ENCODE measurements at regions of chr1 and their contacts with region 1.

Region 1: GRCh38 chr1:10143961-10144485 is 66.3 kb upstream of the KIF1B start:
- DNase-seq: no peak
- ATAC-seq: no peak
- H3K4me3 ChIP-seq: no peak overlapping the region
- H3K27ac ChIP-seq: no peak overlapping the region
- H3K4me1 ChIP-seq: no peaks in the 10 kb centered on the region
- H3K27me3 ChIP-seq: no peaks in the 10 kb centered on the region
- CTCF ChIP-seq: no peak

Region 2: DNA sequence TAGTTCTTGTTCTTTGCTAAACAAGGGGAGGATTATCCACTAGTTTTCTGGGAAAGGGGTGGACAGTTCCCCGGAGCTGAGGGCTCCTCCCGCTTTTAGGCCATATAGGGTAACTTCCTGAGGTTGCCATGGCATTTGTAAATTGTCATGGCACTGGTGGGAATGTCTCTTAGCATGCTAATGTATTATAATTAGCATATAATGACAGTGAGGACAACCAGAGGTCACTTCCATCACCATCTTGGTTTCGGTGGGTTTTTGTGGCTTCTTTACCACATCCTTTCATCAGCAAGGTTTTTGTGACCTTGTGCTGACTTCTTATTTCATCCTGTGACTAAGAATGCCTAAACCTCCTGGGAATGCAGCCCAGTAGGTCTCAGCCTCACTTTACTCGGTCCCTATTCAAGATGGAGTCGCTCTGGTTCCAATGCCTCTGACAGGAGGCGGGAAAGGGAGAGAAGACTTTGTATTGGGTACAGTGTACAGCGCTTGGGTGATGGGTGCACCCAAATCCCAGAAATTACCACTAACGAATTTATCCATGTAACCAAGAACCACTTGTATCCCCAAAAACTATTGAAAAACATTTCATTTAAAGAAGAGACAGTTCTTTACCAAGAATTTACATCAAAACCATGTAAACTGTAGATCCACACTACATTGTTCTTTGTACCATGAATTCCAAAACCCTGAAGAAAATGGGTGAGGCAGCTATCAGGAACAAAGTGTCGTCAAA is 1065.8 kb before region 1 on chr1:
- CTCF ChIA-PET with region 1: no interaction called
- POLR2A ChIA-PET with region 1: no interaction called
- in situ Hi-C with region 1: no loop called
- intact Hi-C with region 1: no loop called
- DNase-seq: no peak
- ATAC-seq: no peak
- H3K4me3 ChIP-seq: no peak overlapping the region
- H3K27ac ChIP-seq: no peak overlapping the region
- H3K4me1 ChIP-seq: no peaks in the 10 kb centered on the region; the same call in 1 of the 2 replicates
- H3K27me3 ChIP-seq: no peaks in the 10 kb centered on the region
- CTCF ChIP-seq: no peak

Region 3: GRCh38 chr1:10216090-10216749 is 72.2 kb after region 1 on chr1:
- CTCF ChIA-PET with region 1: interaction called, 20 read pairs
- POLR2A ChIA-PET with region 1: no interaction called
- in situ Hi-C with region 1: no loop called
- intact Hi-C with region 1: no loop called
- DNase-seq: no peak
- ATAC-seq: no peak
- H3K4me3 ChIP-seq: no peak overlapping the region
- H3K27ac ChIP-seq: no peak overlapping the region
- H3K4me1 ChIP-seq: peaks cover 23% of the 10 kb centered on the region
- H3K27me3 ChIP-seq: no peaks in the 10 kb centered on the region
- CTCF ChIP-seq: no peak